ENCODE measurements at regions of chr5 and their contacts with region 1.

Region 1: GRCh38 chr5:55936100-55936693 is 58.6 kb downstream of the IL6ST start:
- DNase-seq: no peak
- ATAC-seq: peak; percentile 81
- H3K4me3 ChIP-seq: no peak overlapping the region
- H3K27ac ChIP-seq: no peak overlapping the region
- H3K4me1 ChIP-seq: no peaks in the 10 kb centered on the region
- H3K27me3 ChIP-seq: no peaks in the 10 kb centered on the region
- CTCF ChIP-seq: peak; percentile 83 to 94 (median 87)
- EP300 ChIP-seq: no peak
- POLR2A ChIP-seq: no peak
- RAD21 ChIP-seq: peak; percentile 92

Region 2: GRCh38 chr5:55923177-55923771 is 12.9 kb before region 1 on chr5:
- CTCF ChIA-PET with region 1: interaction called, 49 read pairs
- POLR2A ChIA-PET with region 1: interaction called, 3 read pairs
- RAD21 ChIA-PET with region 1: interaction called, 3 read pairs
- SMC1A ChIA-PET with region 1: interaction called, 20 read pairs
- in situ Hi-C with region 1: no loop called
- intact Hi-C with region 1: no loop called
- DNase-seq: no peak
- ATAC-seq: peak; percentile 40
- H3K4me3 ChIP-seq: peak overlapping the region; percentile 49; the same call in 1 of the 2 replicates
- H3K27ac ChIP-seq: peak overlapping the region; percentile 15; the same call in 1 of the 2 replicates
- H3K4me1 ChIP-seq: peaks cover 17% of the 10 kb centered on the region
- H3K27me3 ChIP-seq: no peaks in the 10 kb centered on the region
- CTCF ChIP-seq: no peak
- EP300 ChIP-seq: no peak
- POLR2A ChIP-seq: no peak
- RAD21 ChIP-seq: no peak

Region 3: DNA sequence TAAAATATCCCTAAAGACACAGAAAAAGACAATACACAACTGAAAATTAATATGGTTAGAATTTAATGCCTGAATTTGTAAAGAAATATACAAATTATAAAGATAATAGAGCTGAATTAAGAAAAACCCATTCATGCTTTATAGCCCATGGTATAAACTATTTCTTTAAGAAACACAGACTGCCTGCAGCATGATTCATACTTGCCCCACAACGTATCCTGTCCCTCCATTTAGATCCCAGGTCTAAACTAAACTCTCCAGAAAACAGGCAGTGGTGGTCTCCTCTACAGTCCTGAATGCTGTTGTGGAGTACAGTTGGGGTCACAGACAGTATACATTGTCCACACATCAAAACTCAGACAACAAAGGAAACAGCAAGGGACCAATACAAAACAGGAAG is 33.8 kb after region 1 on chr5:
- CTCF ChIA-PET with region 1: interaction called, 19 read pairs
- POLR2A ChIA-PET with region 1: interaction called, 12 read pairs
- RAD21 ChIA-PET with region 1: interaction called, 9 read pairs
- SMC1A ChIA-PET with region 1: interaction called, 3 read pairs
- in situ Hi-C with region 1: no loop called
- intact Hi-C with region 1: no loop called
- DNase-seq: no peak
- ATAC-seq: no peak
- H3K4me3 ChIP-seq: no peak overlapping the region
- H3K27ac ChIP-seq: no peak overlapping the region
- H3K4me1 ChIP-seq: no peaks in the 10 kb centered on the region
- H3K27me3 ChIP-seq: no peaks in the 10 kb centered on the region
- CTCF ChIP-seq: no peak
- EP300 ChIP-seq: no peak
- POLR2A ChIP-seq: no peak
- RAD21 ChIP-seq: no peak

Region 4: GRCh38 chr5:55994574-55995333 is 58.6 kb after region 1 on chr5 and contains the start of gene IL6ST:
- CTCF ChIA-PET with region 1: interaction called, 12 read pairs
- POLR2A ChIA-PET with region 1: interaction called, 4 read pairs
- RAD21 ChIA-PET with region 1: interaction called, 4 read pairs
- SMC1A ChIA-PET with region 1: interaction called, 9 read pairs
- in situ Hi-C with region 1: no loop called
- intact Hi-C with region 1: no loop called
- DNase-seq: peak; percentile 78
- ATAC-seq: peak; percentile 91
- H3K4me3 ChIP-seq: peak within 1 kb of the TSS; percentile 93
- H3K27ac ChIP-seq: peak within 1 kb of the TSS; percentile 93
- H3K4me1 ChIP-seq: no peaks in the 10 kb centered on the region; the same call in none of the 2 replicates
- H3K27me3 ChIP-seq: no peaks in the 10 kb centered on the region
- CTCF ChIP-seq: peak in 1 of 3 experiments; percentile 19; a peak in 1 of 6 replicates
- EP300 ChIP-seq: no peak
- POLR2A ChIP-seq: peak; percentile 88
- RAD21 ChIP-seq: no peak
- polyA plus RNA-seq, gene IL6ST: 1.5 to 1.8 TPM

Region 5: GRCh38 chr5:56095579-56096102 is 159.4 kb after region 1 on chr5:
- CTCF ChIA-PET with region 1: interaction called, 4 read pairs
- POLR2A ChIA-PET with region 1: no interaction called
- RAD21 ChIA-PET with region 1: interaction called, 5 read pairs
- SMC1A ChIA-PET with region 1: interaction called, 13 read pairs
- in situ Hi-C with region 1: no loop called
- intact Hi-C with region 1: no loop called
- DNase-seq: peak; percentile 96
- ATAC-seq: peak; percentile 87
- H3K4me3 ChIP-seq: no peak overlapping the region
- H3K27ac ChIP-seq: peak overlapping the region; percentile 76
- H3K4me1 ChIP-seq: peaks cover 21% of the 10 kb centered on the region
- H3K27me3 ChIP-seq: no peaks in the 10 kb centered on the region
- CTCF ChIP-seq: no peak
- EP300 ChIP-seq: peak; percentile 79 to 90
- POLR2A ChIP-seq: no peak
- RAD21 ChIP-seq: no peak

Region 6: GRCh38 chr5:56123531-56124243 is 187.5 kb after region 1 on chr5:
- CTCF ChIA-PET with region 1: no interaction called
- POLR2A ChIA-PET with region 1: no interaction called
- RAD21 ChIA-PET with region 1: no interaction called
- SMC1A ChIA-PET with region 1: no interaction called
- in situ Hi-C with region 1: no loop called
- intact Hi-C with region 1: no loop called
- DNase-seq: no peak
- ATAC-seq: no peak
- H3K4me3 ChIP-seq: no peak overlapping the region
- H3K27ac ChIP-seq: no peak overlapping the region
- H3K4me1 ChIP-seq: no peaks in the 10 kb centered on the region
- H3K27me3 ChIP-seq: no peaks in the 10 kb centered on the region
- CTCF ChIP-seq: no peak
- EP300 ChIP-seq: no peak
- POLR2A ChIP-seq: no peak
- RAD21 ChIP-seq: no peak

Region 7: GRCh38 chr5:56190497-56190896 is 254.3 kb after region 1 on chr5:
- CTCF ChIA-PET with region 1: interaction called, 8 read pairs
- POLR2A ChIA-PET with region 1: no interaction called
- RAD21 ChIA-PET with region 1: no interaction called
- SMC1A ChIA-PET with region 1: interaction called, 3 read pairs
- in situ Hi-C with region 1: loop called (anchors 5 kb)
- intact Hi-C with region 1: no loop called
- DNase-seq: no peak
- ATAC-seq: no peak
- H3K4me3 ChIP-seq: no peak overlapping the region
- H3K27ac ChIP-seq: no peak overlapping the region
- H3K4me1 ChIP-seq: no peaks in the 10 kb centered on the region
- H3K27me3 ChIP-seq: no peaks in the 10 kb centered on the region
- CTCF ChIP-seq: no peak
- EP300 ChIP-seq: no peak
- POLR2A ChIP-seq: no peak
- RAD21 ChIP-seq: no peak

Region 8: DNA sequence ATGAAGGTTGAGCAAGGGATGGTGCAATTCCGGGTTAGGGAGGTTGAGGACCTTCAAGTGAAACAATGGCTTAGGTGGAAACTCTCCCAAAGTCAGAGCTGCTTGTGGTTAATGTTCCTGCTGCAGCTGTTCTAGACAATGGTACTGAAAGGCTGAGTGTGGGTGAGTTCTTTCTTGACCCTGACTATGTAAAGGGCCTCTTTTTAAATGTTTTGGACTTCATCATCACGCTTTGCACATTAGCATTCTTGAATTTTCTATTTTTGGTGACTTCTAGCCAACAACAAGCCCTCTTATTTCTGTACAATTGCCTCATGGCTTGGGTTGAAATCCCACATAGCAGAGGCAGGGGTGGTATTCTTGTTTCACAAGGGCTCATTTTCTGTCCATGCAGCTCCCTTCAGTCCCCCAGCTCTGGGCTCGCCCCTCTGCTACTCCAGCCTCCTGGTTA is 433.2 kb after region 1 on chr5:
- CTCF ChIA-PET with region 1: no interaction called
- POLR2A ChIA-PET with region 1: no interaction called
- RAD21 ChIA-PET with region 1: no interaction called
- SMC1A ChIA-PET with region 1: no interaction called
- in situ Hi-C with region 1: no loop called
- intact Hi-C with region 1: no loop called
- DNase-seq: no peak
- ATAC-seq: no peak
- H3K4me3 ChIP-seq: no peak overlapping the region
- H3K27ac ChIP-seq: no peak overlapping the region
- H3K4me1 ChIP-seq: no peaks in the 10 kb centered on the region
- H3K27me3 ChIP-seq: peaks cover 0 to 2% of the 10 kb centered on the region in 2 experiments; a peak in 1 of 4 replicates
- CTCF ChIP-seq: no peak
- EP300 ChIP-seq: no peak
- POLR2A ChIP-seq: no peak
- RAD21 ChIP-seq: no peak

Measured in GM12878 (cell line).